ENCODE measurements at regions of chr10 and their contacts with region 1.

Region 1: DNA sequence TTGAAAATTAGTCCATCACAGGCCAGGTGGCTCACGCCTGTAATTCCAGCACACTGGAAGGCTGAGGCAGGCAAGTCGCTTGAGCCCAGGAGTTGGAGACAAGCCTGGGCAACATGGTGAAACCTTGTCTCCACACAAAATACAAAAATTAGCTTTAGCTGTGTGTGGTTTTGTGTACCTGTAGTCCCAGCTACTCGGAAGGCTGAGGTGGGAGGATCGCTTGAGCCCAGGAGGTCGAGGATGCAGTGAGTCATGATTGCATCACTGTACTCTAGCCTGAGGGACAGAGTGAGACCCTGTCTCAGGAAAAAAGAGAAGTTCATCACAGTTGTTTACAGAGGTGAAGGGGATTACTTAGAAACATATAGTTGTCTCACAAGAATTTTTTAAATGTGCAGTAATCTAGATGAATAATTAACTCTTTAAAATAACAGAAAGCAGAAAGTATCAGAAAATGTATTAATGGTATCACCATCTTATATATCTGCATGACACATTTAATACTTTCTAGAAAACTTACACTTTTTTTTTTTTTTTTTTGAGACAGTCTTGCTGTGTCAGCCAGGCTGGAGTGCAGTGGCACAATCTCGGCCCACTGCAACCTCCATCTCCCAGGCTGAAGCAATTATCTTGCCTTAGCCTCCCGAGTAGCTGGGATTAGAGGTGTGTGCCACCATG is 8.9 kb downstream of the LCOR start:
- DNase-seq: peak in 2 of 14 experiments; percentile 25 to 38
- ATAC-seq: no peak
- H3K4me3 ChIP-seq: no peak overlapping the region
- H3K4me3 Mint-ChIP-seq: no peak overlapping the region
- H3K27ac ChIP-seq: no peak overlapping the region
- H3K27ac Mint-ChIP-seq: no peak overlapping the region
- H3K4me1 ChIP-seq: peaks cover 18% of the 10 kb centered on the region
- H3K4me1 Mint-ChIP-seq: peaks cover 74% of the 10 kb centered on the region
- H3K27me3 ChIP-seq: no peaks in the 10 kb centered on the region
- H3K27me3 Mint-ChIP-seq: no peaks in the 10 kb centered on the region
- CTCF ChIP-seq: no peak

Region 2: DNA sequence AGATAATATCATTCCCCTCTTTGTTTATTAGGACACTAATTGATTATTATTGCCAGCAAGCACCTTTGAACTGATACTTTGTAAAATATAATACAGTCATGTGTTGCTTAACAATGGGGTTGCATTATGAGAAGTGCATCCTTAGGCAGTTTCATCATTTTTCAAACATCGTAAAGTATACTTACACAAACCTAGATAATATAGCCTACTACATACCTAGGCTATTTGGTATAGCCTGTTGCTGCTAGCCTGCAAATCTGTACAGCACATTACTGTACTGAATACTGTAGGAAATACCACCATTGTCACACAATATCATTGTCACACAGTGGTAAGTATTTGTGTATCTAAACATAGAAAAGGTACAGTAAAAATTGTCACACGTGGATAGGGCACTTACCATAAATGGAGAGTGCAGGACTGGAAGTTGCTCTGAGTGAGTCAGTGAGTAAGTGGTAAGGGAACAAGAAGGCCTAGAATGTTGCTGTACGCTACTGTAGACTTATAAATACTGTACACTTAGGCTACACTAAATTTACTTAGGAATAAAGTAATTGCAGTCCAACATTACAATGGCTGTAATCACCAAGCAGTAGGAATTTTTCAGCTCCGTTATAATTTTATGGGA is 61.9 kb after region 1 on chr10:
- CTCF ChIA-PET with region 1: no interaction called
- POLR2A ChIA-PET with region 1: no interaction called
- intact Hi-C with region 1: loop called in 1 of 2 experiments (anchors 10 kb)
- DNase-seq: no peak
- ATAC-seq: no peak
- H3K4me3 ChIP-seq: no peak overlapping the region
- H3K4me3 Mint-ChIP-seq: no peak overlapping the region
- H3K27ac ChIP-seq: no peak overlapping the region
- H3K27ac Mint-ChIP-seq: peak overlapping the region; percentile 34
- H3K4me1 ChIP-seq: peaks cover 4% of the 10 kb centered on the region
- H3K4me1 Mint-ChIP-seq: peaks cover 62% of the 10 kb centered on the region
- H3K27me3 ChIP-seq: no peaks in the 10 kb centered on the region
- H3K27me3 Mint-ChIP-seq: no peaks in the 10 kb centered on the region
- CTCF ChIP-seq: no peak